GM12878 (cell line): ENCODE measurements at regions of chr7 and their contacts with region 1.

Region 1: GRCh38 chr7:122528879-122529481 is 169.9 kb downstream of the RNF133 start:
- DNase-seq: no peak
- ATAC-seq: peak; percentile 54
- H3K4me3 ChIP-seq: no peak overlapping the region
- H3K27ac ChIP-seq: no peak overlapping the region
- H3K4me1 ChIP-seq: no peaks in the 10 kb centered on the region
- H3K27me3 ChIP-seq: no peaks in the 10 kb centered on the region
- CTCF ChIP-seq: peak in 2 of 3 experiments; percentile 34 to 44; a peak in 4 of 6 replicates
- EP300 ChIP-seq: no peak
- POLR2A ChIP-seq: no peak
- RAD21 ChIP-seq: peak; percentile 39

Region 2: GRCh38 chr7:122092964-122093797 is 435.8 kb before region 1 on chr7:
- CTCF ChIA-PET with region 1: interaction called, 108 read pairs
- POLR2A ChIA-PET with region 1: no interaction called
- RAD21 ChIA-PET with region 1: interaction called, 18 read pairs
- SMC1A ChIA-PET with region 1: interaction called, 36 read pairs
- in situ Hi-C with region 1: loop called (anchors 5 kb)
- intact Hi-C with region 1: loop called (anchors 2 kb)
- DNase-seq: peak; percentile 37
- ATAC-seq: peak; percentile 97
- H3K4me3 ChIP-seq: no peak overlapping the region
- H3K27ac ChIP-seq: no peak overlapping the region
- H3K4me1 ChIP-seq: no peaks in the 10 kb centered on the region
- H3K27me3 ChIP-seq: no peaks in the 10 kb centered on the region
- CTCF ChIP-seq: peak; percentile 83 to 93 (median 91)
- EP300 ChIP-seq: no peak
- POLR2A ChIP-seq: no peak
- RAD21 ChIP-seq: peak; percentile 73

Region 3: DNA sequence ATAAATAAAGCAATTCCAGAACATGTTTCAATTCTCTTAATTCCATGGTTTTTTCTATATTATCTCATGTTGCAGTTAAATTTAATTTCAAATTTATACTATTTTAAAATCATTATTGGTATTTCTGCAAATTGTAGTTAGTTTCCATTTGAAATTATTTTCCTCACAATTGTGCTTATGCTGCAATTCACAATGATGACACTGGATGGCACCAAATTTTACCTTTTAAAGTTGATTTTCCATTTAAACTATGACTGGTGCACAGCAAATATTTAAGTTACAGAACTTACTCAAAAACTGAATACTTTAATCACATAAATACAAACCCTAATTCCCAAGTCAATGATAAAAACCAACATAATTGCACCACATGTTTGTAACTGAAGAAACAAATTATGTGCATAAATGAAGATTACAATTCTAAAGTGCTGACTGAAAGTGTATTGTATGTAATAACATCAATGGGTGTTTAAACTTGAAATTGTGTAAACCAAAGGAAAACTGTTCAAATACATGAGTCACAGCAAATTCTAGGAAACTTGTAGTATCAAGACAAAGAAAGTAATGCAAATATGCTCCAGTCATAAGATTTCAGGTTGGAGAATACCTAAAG is 309.6 kb before region 1 on chr7:
- CTCF ChIA-PET with region 1: interaction called, 220 read pairs
- POLR2A ChIA-PET with region 1: no interaction called
- RAD21 ChIA-PET with region 1: interaction called, 173 read pairs
- SMC1A ChIA-PET with region 1: interaction called, 70 read pairs
- in situ Hi-C with region 1: loop called (anchors 5 kb)
- intact Hi-C with region 1: loop called (anchors 1 kb)
- DNase-seq: no peak
- ATAC-seq: no peak
- H3K4me3 ChIP-seq: no peak overlapping the region
- H3K27ac ChIP-seq: no peak overlapping the region
- H3K4me1 ChIP-seq: no peaks in the 10 kb centered on the region
- H3K27me3 ChIP-seq: no peaks in the 10 kb centered on the region
- CTCF ChIP-seq: peak; percentile 51 to 67 (median 55); a peak in 5 of 6 replicates
- EP300 ChIP-seq: no peak
- POLR2A ChIP-seq: no peak
- RAD21 ChIP-seq: peak; percentile 71

Region 4: GRCh38 chr7:122515404-122515803 is 13.6 kb before region 1 on chr7:
- CTCF ChIA-PET with region 1: interaction called, 10 read pairs
- POLR2A ChIA-PET with region 1: no interaction called
- RAD21 ChIA-PET with region 1: interaction called, 5 read pairs
- SMC1A ChIA-PET with region 1: interaction called, 4 read pairs
- in situ Hi-C with region 1: no loop called
- intact Hi-C with region 1: no loop called
- DNase-seq: no peak
- ATAC-seq: peak; percentile 58
- H3K4me3 ChIP-seq: no peak overlapping the region
- H3K27ac ChIP-seq: no peak overlapping the region
- H3K4me1 ChIP-seq: no peaks in the 10 kb centered on the region
- H3K27me3 ChIP-seq: no peaks in the 10 kb centered on the region
- CTCF ChIP-seq: no peak
- EP300 ChIP-seq: no peak
- POLR2A ChIP-seq: no peak
- RAD21 ChIP-seq: no peak

Region 5: DNA sequence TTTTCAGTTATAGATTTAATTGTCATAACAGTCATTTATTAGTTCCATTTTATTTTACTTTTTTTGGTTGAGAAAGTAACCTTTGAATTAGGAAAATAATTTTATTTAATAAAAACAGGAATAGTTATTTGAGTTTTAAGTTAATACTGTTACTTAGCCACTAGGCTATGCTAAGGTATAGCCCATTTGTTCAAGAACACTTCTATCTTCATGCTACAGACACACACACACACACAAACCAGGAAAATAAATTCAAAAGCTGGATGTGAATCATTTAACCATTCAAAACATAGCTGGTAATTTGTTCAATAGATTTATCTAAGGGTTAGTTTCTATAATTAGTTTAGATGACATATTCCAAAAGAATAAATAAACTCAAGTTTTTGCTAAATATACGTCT is 21.6 kb after region 1 on chr7:
- CTCF ChIA-PET with region 1: interaction called, 13 read pairs
- POLR2A ChIA-PET with region 1: no interaction called
- RAD21 ChIA-PET with region 1: interaction called, 4 read pairs
- SMC1A ChIA-PET with region 1: interaction called, 7 read pairs
- in situ Hi-C with region 1: no loop called
- intact Hi-C with region 1: no loop called
- DNase-seq: no peak
- ATAC-seq: peak; percentile 68
- H3K4me3 ChIP-seq: no peak overlapping the region
- H3K27ac ChIP-seq: no peak overlapping the region
- H3K4me1 ChIP-seq: no peaks in the 10 kb centered on the region
- H3K27me3 ChIP-seq: no peaks in the 10 kb centered on the region; a peak in 1 of 4 replicates
- CTCF ChIP-seq: peak in 2 of 3 experiments; percentile 23 to 60; a peak in 2 of 6 replicates
- EP300 ChIP-seq: no peak
- POLR2A ChIP-seq: no peak
- RAD21 ChIP-seq: no peak

Region 6: GRCh38 chr7:122727759-122728158 is 198.8 kb after region 1 on chr7:
- CTCF ChIA-PET with region 1: no interaction called
- POLR2A ChIA-PET with region 1: no interaction called
- RAD21 ChIA-PET with region 1: no interaction called
- SMC1A ChIA-PET with region 1: no interaction called
- in situ Hi-C with region 1: no loop called
- intact Hi-C with region 1: no loop called
- DNase-seq: no peak
- ATAC-seq: no peak
- H3K4me3 ChIP-seq: no peak overlapping the region
- H3K27ac ChIP-seq: no peak overlapping the region
- H3K4me1 ChIP-seq: no peaks in the 10 kb centered on the region
- H3K27me3 ChIP-seq: no peaks in the 10 kb centered on the region
- CTCF ChIP-seq: no peak
- EP300 ChIP-seq: no peak
- POLR2A ChIP-seq: no peak
- RAD21 ChIP-seq: no peak